ENCODE measurements at regions of chr5 and their contacts with region 1.

Region 1: DNA sequence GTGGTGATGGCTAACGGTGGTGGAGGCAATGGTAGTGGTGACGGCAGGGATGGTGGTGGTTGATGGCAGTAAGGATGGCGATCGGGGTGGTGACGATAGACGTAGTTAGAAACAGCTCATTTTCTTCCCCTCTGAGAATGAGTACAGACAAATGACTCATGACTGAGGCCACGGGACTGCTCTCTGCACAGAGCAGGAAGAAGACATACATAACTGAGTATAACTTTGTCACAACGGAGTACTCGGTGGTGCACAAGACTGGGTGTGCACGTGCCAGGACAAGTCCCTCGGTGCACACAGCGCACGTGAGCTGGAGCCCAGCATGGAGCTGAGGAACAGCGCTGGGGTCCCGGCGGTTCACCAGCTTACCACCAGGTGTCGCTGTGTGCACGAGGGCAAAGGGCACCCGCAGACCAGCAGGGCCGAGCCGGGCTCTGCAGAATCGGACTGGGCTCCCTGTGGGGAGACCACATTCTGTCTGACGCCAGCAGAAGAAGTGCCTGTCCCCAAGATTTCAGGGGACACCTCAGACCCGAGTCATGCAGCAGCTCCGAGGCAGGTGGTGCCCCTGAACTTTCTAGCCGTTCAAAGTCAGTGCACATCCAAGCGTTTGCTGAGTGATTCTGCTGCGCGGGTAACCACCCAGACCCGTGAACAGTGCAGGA is 188.6 kb downstream of the FSTL4 start:
- DNase-seq: peak; percentile 53 to 75
- ATAC-seq: peak; percentile 90 to 96
- H3K4me3 ChIP-seq: no peak overlapping the region
- H3K27ac ChIP-seq: 0 out of 6 replicates have a peak overlapping the region, but pooled peaks of 1 of the 2 experiments have one; percentile 19
- H3K4me1 ChIP-seq: peaks cover 5% of the 10 kb centered on the region; the same call in 1 of the 3 replicates
- CTCF ChIP-seq: peak; percentile 92
- EP300 ChIP-seq: no peak
- POLR2A ChIP-seq: no peak
- RAD21 ChIP-seq: peak; percentile 78 to 87

Region 2: GRCh38 chr5:133404724-133405123 is 19.0 kb before region 1 on chr5:
- CTCF ChIA-PET with region 1: interaction called, 59 read pairs
- POLR2A ChIA-PET with region 1: no interaction called
- DNase-seq: peak; percentile 12 to 13
- ATAC-seq: peak in 1 of 2 experiments; percentile 70; a peak in 3 of 6 replicates
- H3K4me3 ChIP-seq: no peak overlapping the region
- H3K27ac ChIP-seq: no peak overlapping the region
- H3K4me1 ChIP-seq: no peaks in the 10 kb centered on the region
- CTCF ChIP-seq: no peak
- EP300 ChIP-seq: no peak
- POLR2A ChIP-seq: no peak
- RAD21 ChIP-seq: no peak

Region 3: GRCh38 chr5:133508845-133509741 is 85.3 kb after region 1 on chr5:
- CTCF ChIA-PET with region 1: interaction called, 17 read pairs
- POLR2A ChIA-PET with region 1: no interaction called
- DNase-seq: no peak
- ATAC-seq: no peak
- H3K4me3 ChIP-seq: no peak overlapping the region
- H3K27ac ChIP-seq: no peak overlapping the region
- H3K4me1 ChIP-seq: peaks cover 9% of the 10 kb centered on the region
- CTCF ChIP-seq: no peak
- EP300 ChIP-seq: no peak
- POLR2A ChIP-seq: no peak
- RAD21 ChIP-seq: no peak

Region 4: DNA sequence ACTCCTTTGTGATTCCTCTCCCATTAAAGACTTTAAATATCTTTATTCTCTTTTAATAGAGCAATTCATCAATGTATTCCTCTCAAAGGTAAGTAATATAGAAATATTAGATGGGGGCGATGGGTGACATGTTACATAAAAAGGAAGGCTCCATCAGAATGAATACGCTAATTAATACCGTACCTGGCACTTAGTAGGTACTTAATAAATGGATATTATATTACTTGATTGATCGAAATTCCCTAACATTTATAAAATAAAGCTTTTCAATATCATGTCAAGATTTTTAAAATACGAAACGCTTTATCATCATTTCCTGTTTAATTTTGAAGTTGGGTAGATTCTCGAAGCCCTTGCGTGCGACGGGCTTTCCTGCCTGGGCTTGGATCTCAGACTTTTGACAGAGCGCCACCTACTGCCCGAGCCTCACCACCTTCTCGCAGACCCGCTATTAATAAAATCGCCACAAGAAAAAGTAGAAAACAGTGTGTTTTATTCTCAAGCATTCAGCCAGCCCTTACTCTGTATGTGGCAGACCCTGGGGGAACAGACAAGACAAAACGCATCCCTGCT is 445.3 kb after region 1 on chr5:
- CTCF ChIA-PET with region 1: interaction called, 74 read pairs
- POLR2A ChIA-PET with region 1: no interaction called
- DNase-seq: peak; percentile 75
- ATAC-seq: peak; percentile 76 to 90
- H3K4me3 ChIP-seq: no peak overlapping the region
- H3K27ac ChIP-seq: peak overlapping the region; percentile 11 to 59; a peak in 2 of 6 replicates
- H3K4me1 ChIP-seq: peaks cover 16% of the 10 kb centered on the region; the same call in 1 of the 3 replicates
- CTCF ChIP-seq: peak; percentile 91
- EP300 ChIP-seq: no peak
- POLR2A ChIP-seq: no peak
- RAD21 ChIP-seq: peak; percentile 87 to 90

Region 5: GRCh38 chr5:133944263-133945185 is 520.8 kb after region 1 on chr5:
- CTCF ChIA-PET with region 1: interaction called, 19 read pairs
- POLR2A ChIA-PET with region 1: no interaction called
- DNase-seq: peak; percentile 64 to 74
- ATAC-seq: peak; percentile 77 to 90; a peak in 4 of 6 replicates
- H3K4me3 ChIP-seq: no peak overlapping the region
- H3K27ac ChIP-seq: no peak overlapping the region
- H3K4me1 ChIP-seq: no peaks in the 10 kb centered on the region
- CTCF ChIP-seq: peak; percentile 58
- EP300 ChIP-seq: no peak
- POLR2A ChIP-seq: no peak
- RAD21 ChIP-seq: peak; percentile 81 to 91

Measured in A549 (cell line).